MCF 10A (cell line): ENCODE measurements at regions of chr11 and their contacts with region 1.

Region 1: GRCh38 chr11:129639300-129639699 is 176.3 kb upstream of the TMEM45B start:
- DNase-seq: peak; percentile 97
- H3K4me3 Mint-ChIP-seq: no peak overlapping the region
- H3K27ac Mint-ChIP-seq: peak overlapping the region; percentile 97
- H3K4me1 Mint-ChIP-seq: peaks cover 77% of the 10 kb centered on the region
- H3K27me3 Mint-ChIP-seq: no peaks in the 10 kb centered on the region
- CTCF ChIP-seq: no peak

Region 2: GRCh38 chr11:129620237-129621104 is 18.8 kb before region 1 on chr11:
- CTCF ChIA-PET with region 1: interaction called, 4 read pairs
- POLR2A ChIA-PET with region 1: interaction called, 71 read pairs
- intact Hi-C with region 1: no loop called
- DNase-seq: peak; percentile 96
- H3K4me3 Mint-ChIP-seq: no peak overlapping the region
- H3K27ac Mint-ChIP-seq: peak overlapping the region; percentile 54
- H3K4me1 Mint-ChIP-seq: peaks cover 20% of the 10 kb centered on the region
- H3K27me3 Mint-ChIP-seq: no peaks in the 10 kb centered on the region
- CTCF ChIP-seq: no peak

Region 3: GRCh38 chr11:129625930-129626329 is 13.4 kb before region 1 on chr11:
- CTCF ChIA-PET with region 1: interaction called, 10 read pairs
- POLR2A ChIA-PET with region 1: interaction called, 71 read pairs
- intact Hi-C with region 1: no loop called
- DNase-seq: peak; percentile 90
- H3K4me3 Mint-ChIP-seq: peak overlapping the region; percentile 48
- H3K27ac Mint-ChIP-seq: peak overlapping the region; percentile 93
- H3K4me1 Mint-ChIP-seq: peaks cover 21% of the 10 kb centered on the region
- H3K27me3 Mint-ChIP-seq: no peaks in the 10 kb centered on the region
- CTCF ChIP-seq: no peak

Region 4: GRCh38 chr11:129652828-129653227 is 13.5 kb after region 1 on chr11:
- CTCF ChIA-PET with region 1: interaction called, 6 read pairs
- POLR2A ChIA-PET with region 1: interaction called, 39 read pairs
- intact Hi-C with region 1: no loop called
- DNase-seq: peak; percentile 95
- H3K4me3 Mint-ChIP-seq: no peak overlapping the region
- H3K27ac Mint-ChIP-seq: no peak overlapping the region
- H3K4me1 Mint-ChIP-seq: peaks cover 13% of the 10 kb centered on the region
- H3K27me3 Mint-ChIP-seq: peaks cover 45% of the 10 kb centered on the region
- CTCF ChIP-seq: no peak

Region 5: DNA sequence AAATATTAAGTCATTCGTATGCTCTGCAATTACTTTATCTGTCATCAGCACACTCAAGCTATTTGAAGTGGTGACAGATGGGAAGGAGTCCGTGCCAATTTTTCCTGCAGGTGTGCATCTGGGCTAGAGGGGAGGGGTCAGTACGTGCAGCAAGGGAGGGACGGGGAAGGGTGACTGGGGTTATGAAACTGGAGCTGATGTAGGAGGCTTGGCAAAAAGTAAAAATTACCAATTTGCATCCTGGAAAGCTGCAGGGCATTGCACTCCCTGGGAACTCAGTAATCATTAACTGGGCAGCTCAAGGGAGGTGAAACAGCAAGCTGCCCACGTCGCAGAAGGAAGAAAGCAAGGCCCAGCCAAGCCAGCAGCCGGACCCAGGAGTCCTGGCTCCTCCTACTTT is 89.3 kb after region 1 on chr11:
- CTCF ChIA-PET with region 1: interaction called, 3 read pairs
- POLR2A ChIA-PET with region 1: interaction called, 12 read pairs
- intact Hi-C with region 1: no loop called
- DNase-seq: peak; percentile 55
- H3K4me3 Mint-ChIP-seq: no peak overlapping the region
- H3K27ac Mint-ChIP-seq: no peak overlapping the region
- H3K4me1 Mint-ChIP-seq: peaks cover 54% of the 10 kb centered on the region
- H3K27me3 Mint-ChIP-seq: peaks cover 5% of the 10 kb centered on the region
- CTCF ChIP-seq: no peak